H1 (cell line): ENCODE measurements at regions of chr19 and their contacts with region 1.

Region 1: DNA sequence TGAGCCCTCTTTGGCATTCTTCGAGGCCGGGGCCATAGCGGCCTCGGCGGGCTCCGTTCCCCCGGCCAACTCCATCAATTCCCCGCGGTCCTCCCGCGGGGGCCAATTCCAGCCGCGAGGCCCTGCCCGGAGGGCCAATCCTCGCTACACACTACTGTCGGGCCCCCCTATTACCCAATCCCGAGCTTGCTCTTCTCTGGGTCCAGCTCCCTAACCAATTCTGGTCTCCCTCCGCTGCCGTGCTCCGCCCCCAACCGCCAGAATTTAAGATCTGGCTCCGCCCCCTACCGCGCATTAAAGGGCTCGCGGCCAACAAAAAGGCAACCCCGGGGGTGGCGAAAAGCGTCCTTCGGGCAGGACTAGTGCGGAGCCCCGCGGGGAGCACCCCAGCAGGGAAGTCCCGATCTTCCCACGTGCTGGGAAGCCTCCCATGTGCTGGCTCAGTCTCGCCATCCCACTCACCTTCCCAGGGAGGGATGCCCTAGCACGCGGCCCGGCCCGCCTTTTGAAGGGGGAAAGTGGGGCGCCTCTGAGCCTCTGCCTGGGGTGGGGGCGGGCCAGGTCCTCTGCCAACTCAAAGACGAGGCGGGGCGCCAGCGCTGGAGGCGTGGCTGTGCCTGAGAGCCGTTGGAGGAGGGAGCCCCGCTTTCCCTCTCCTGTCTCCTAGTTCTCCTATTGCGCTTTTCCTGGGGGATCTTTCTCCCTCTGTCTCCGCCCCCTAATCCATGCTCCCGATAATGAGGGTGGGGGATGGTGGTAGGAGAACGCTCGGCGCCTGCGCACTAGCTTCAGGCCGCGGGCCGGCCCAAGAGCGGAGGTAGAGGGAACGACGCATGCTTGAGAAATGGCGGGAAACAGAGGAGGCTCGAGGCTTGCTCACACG is 3.5 kb downstream of the LIPE start:
- DNase-seq: peak in 1 of 2 experiments; percentile 96
- H3K4me3 ChIP-seq: peak overlapping the region; percentile 58 to 68 (median 64)
- H3K27ac ChIP-seq: 0 out of 2 replicates have a peak overlapping the region, but pooled peaks have one; percentile 34
- H3K4me1 ChIP-seq: peaks cover 0 to 13% (median 4%) of the 10 kb centered on the region in 4 experiments; a peak in 5 of 7 replicates
- H3K27me3 ChIP-seq: peaks cover 13 to 41% (median 35%) of the 10 kb centered on the region in 4 experiments
- CTCF ChIP-seq: no peak
- EP300 ChIP-seq: no peak
- POLR2A ChIP-seq: peak in 1 of 2 experiments; percentile 69; a peak in 1 of 3 replicates
- RAD21 ChIP-seq: no peak

Region 2: DNA sequence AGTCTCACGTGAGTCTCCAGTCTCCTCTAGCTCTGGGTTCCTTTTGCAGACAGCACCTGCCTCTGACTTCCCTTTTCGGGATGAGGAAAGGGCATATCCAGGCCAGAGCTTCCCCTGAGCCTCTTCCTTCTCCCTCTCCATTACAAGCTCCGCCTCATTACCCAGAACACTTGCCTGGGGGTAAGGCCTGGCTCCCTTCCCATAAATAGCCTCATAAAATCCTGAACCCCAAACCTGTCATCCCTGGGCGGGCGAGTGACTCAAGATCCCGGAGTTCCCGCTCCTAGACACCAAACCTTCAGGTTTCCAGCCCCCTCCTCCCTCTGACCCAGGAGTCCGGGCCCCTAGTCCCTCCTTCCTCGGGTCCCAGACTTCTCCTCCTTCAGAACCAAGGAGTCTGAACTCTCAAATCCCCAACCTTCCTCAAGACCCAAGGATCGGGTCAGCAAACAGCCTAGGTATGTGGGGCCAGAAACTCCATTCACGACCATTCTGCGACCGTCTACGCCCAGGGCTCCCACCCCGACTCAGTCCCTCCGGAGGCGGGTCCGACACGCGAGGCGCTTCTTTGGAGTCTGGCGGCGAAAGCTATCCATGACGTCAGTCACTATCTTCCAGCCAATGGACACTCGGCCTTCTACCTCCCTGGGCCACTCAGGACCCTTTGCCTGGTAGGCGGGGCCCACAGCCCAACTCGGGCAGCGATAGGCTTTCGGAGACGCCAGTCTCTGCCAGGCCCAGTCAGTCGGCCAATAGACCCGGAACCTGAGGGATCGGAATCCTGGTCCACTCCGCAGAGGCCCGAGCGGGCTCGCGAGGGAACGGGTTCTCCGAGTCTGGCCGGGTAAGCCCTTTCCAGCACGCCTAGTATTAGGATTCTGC is 27.1 kb before region 1 on chr19:
- CTCF ChIA-PET with region 1: interaction called, 27 read pairs
- POLR2A ChIA-PET with region 1: interaction called, 17 read pairs
- DNase-seq: peak; percentile 97 to 100
- H3K4me3 ChIP-seq: peak overlapping the region; percentile 81 to 89 (median 86)
- H3K27ac ChIP-seq: peak overlapping the region; percentile 54; the same call in 1 of the 2 replicates
- H3K4me1 ChIP-seq: peaks cover 6 to 10% (median 8%) of the 10 kb centered on the region in 4 experiments; a peak in 6 of 7 replicates
- H3K27me3 ChIP-seq: no peaks in the 10 kb centered on the region; a peak in 1 of 7 replicates
- CTCF ChIP-seq: no peak
- EP300 ChIP-seq: no peak
- POLR2A ChIP-seq: peak; percentile 72 to 82
- RAD21 ChIP-seq: no peak; a peak in 1 of 4 replicates

Region 3: DNA sequence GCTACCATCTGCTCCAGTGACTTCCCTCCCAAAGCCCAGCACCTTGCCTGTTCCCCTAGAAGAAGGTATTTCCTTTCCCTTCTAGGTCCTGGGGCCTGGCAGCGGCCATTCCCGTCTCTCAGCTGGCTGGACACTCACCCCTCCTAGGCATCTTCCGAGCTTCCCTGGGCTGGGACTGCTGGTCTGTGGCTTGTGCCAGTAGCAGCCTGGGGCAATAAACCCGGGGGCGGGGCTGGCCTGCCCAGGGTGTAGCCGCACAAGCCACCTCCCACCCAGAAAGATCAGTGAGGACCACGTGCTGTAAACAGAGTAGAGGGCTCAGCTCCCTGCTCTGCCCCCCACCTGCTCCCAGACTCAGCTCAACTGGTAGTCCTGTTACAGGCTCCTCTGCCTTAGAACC is 11.5 kb before region 1 on chr19:
- CTCF ChIA-PET with region 1: interaction called, 38 read pairs
- POLR2A ChIA-PET with region 1: interaction called, 9 read pairs
- DNase-seq: no peak
- H3K4me3 ChIP-seq: no peak overlapping the region
- H3K27ac ChIP-seq: no peak overlapping the region
- H3K4me1 ChIP-seq: peaks cover 0 to 9% (median 1%) of the 10 kb centered on the region in 4 experiments; a peak in 2 of 7 replicates
- H3K27me3 ChIP-seq: peaks cover 0 to 26% (median 15%) of the 10 kb centered on the region in 4 experiments; a peak in 5 of 7 replicates
- CTCF ChIP-seq: no peak
- EP300 ChIP-seq: no peak
- POLR2A ChIP-seq: no peak
- RAD21 ChIP-seq: no peak

Region 4: DNA sequence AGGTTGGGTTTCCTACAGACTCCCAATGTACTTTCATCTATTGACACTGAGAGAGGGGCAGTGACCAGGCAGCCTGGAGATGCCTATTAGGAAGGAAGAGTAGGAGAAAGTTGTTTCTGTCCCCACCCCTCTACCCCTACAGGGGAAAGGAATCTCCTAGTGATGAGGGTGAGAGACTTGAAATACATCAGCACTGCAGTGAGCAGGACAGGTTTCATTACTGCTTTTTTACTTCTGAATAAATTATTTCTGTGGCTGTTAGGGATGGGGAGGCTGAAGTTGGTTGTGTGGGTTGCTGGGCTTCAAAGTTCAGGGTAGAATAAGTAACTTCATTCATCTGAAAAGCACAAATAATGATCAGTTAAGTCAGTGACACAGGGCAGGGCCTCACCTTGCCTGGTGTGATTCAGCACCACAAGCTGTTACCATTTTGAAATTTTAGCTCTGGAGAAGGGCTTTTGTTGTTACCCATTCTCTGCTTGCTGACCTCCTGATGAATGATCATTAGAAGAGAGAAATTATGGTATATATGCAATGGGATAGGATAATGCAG is 85.3 kb after region 1 on chr19:
- CTCF ChIA-PET with region 1: no interaction called
- POLR2A ChIA-PET with region 1: no interaction called
- DNase-seq: no peak
- H3K4me3 ChIP-seq: no peak overlapping the region
- H3K27ac ChIP-seq: no peak overlapping the region
- H3K4me1 ChIP-seq: peaks cover 0 to 9% (median 2%) of the 10 kb centered on the region in 4 experiments; a peak in 2 of 7 replicates
- H3K27me3 ChIP-seq: no peaks in the 10 kb centered on the region; a peak in 1 of 7 replicates
- CTCF ChIP-seq: no peak
- EP300 ChIP-seq: no peak
- POLR2A ChIP-seq: no peak
- RAD21 ChIP-seq: no peak